Body of pancreas (tissue), 4 donors: ENCODE measurements at regions of chr11 and their contacts with region 1.

Region 1: DNA sequence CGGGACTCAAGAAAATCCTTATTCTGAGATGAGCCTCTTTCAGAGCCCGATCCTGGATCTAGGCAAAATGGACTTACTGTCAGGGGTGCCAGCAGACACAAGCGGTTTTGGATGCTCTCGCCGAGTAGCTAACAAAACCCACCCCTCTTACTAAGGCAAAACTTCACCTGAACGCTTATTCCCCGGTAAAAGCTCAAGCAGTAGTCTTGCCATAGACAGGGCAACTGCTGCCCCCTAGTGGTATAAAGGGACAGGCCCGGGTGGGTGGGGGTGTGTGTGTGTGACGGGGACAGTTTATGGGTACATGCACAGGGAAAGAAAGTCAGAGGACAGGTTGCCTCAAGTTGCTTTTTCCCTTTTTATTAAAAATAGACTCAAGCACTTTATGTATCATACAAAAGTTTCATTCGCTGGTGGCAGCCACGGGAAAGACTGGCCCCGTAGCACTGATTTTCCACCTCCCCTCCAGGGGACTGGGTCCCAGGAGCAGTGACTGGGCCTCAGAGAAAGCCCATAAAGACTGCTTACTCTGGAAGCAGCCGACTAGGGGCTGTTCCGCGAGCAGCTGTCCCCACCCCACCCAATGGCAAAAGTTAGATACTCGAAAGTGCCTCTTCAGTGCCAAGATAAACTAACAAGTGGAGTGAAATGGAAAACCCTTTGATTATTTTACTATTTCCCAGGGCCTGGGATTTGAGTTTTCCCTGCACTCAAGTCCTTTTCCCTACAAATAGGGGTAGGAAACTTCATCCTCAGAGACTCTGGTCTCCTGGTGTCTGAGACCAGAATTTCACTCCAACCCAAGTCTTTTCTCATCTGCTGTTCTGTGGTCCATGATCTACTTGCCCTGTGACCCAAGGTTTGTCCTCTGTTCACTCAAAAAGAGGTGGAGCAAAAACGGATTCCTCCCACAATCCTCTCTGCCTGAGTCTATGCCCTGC is 4.7 kb downstream of the YPEL4 start:
- DNase-seq: peak; percentile 84 to 87 (median 86)
- ATAC-seq: peak; percentile 81
- H3K4me3 ChIP-seq: no peak overlapping the region
- H3K27ac ChIP-seq: no peak overlapping the region
- H3K4me1 ChIP-seq: peaks cover 26% of the 10 kb centered on the region
- H3K27me3 ChIP-seq: peaks cover 2 to 26% of the 10 kb centered on the region in 2 donors
- CTCF ChIP-seq: peak; percentile 70 to 97 (median 80)
- POLR2A ChIP-seq: peak in 1 of 3 donors; percentile 2

Region 2: DNA sequence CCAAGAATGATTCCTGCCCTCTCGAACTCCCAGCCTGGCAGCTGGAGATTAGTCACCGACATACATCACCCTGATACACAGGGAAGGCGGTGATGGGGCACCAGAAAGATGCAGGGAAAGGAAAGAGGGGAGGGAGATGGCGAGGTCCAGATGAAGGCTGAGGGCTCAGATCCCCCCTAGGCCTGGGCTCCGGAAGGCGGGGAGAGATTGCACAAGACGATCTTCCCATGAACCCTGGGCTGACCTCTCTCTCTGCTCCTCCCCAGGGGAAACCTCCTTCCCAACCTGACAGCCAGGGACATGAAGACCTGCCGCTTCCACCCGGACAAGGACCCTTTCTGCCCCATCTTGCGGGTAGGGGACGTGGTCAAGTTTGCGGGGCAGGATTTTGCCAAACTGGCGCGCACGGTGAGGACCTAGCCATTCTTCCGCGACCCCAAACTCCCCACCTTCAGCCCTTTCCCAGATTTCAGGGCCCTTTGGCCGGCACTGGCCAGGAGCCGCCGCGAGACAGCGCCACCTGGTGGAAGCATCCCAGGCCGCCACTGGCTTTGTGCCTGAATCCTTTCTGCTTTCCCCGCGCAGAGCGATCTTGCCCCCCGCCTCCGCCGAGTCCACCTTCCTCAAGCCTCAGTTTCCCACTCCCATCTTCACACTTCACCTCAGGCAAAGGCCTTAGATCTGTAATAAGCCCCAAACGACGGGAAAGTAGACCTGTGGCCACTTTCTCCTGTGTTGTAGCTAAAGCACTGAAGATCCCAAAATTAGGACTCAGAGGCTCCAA is 295.3 kb before region 1 on chr11:
- intact Hi-C with region 1: loop called (anchors 10 kb)
- DNase-seq: peak; percentile 54 to 71 (median 68)
- ATAC-seq: peak; percentile 69
- H3K4me3 ChIP-seq: no peak overlapping the region
- H3K27ac ChIP-seq: no peak overlapping the region
- H3K4me1 ChIP-seq: peaks cover 13% of the 10 kb centered on the region
- H3K27me3 ChIP-seq: no peaks in the 10 kb centered on the region
- CTCF ChIP-seq: peak; percentile 74 to 94 (median 85)
- POLR2A ChIP-seq: no peak

Region 3: GRCh38 chr11:57460022-57460757 is 184.8 kb before region 1 on chr11 and contains the start of gene RTN4RL2:
- intact Hi-C with region 1: loop called (anchors 10 kb)
- DNase-seq: peak; percentile 40 to 51 (median 48)
- ATAC-seq: peak; percentile 37
- H3K4me3 ChIP-seq: no peak within 1 kb of the TSS
- H3K27ac ChIP-seq: no peak within 1 kb of the TSS
- H3K4me1 ChIP-seq: peaks cover 39% of the 10 kb centered on the region
- H3K27me3 ChIP-seq: no peaks in the 10 kb centered on the region
- CTCF ChIP-seq: peak in 2 of 7 experiments; percentile 10 to 14
- POLR2A ChIP-seq: no peak
- total RNA-seq, gene RTN4RL2: 0.99 to 3.4 TPM

Region 4: GRCh38 chr11:58495906-58496305 is 850.9 kb after region 1 on chr11:
- intact Hi-C with region 1: no loop called
- DNase-seq: no peak
- ATAC-seq: no peak
- H3K4me3 ChIP-seq: no peak overlapping the region
- H3K27ac ChIP-seq: no peak overlapping the region
- H3K4me1 ChIP-seq: no peaks in the 10 kb centered on the region
- H3K27me3 ChIP-seq: no peaks in the 10 kb centered on the region
- CTCF ChIP-seq: no peak
- POLR2A ChIP-seq: no peak